Motor neuron (in vitro differentiated cells): ENCODE measurements at regions of chr11 and their contacts with region 1.

Region 1: GRCh38 chr11:62394825-62395538 is 23.9 kb upstream of the SCGB1A1 start:
- ATAC-seq: peak; percentile 80 to 94 (median 92)
- H3K4me3 ChIP-seq: peak overlapping the region in 4 of 5 donors; percentile 0 to 6 (median 1)
- H3K27ac ChIP-seq: peak overlapping the region in 1 of 2 donors; percentile 18
- H3K4me1 ChIP-seq: peaks cover 21 to 26% of the 10 kb centered on the region in 2 donors

Region 2: DNA sequence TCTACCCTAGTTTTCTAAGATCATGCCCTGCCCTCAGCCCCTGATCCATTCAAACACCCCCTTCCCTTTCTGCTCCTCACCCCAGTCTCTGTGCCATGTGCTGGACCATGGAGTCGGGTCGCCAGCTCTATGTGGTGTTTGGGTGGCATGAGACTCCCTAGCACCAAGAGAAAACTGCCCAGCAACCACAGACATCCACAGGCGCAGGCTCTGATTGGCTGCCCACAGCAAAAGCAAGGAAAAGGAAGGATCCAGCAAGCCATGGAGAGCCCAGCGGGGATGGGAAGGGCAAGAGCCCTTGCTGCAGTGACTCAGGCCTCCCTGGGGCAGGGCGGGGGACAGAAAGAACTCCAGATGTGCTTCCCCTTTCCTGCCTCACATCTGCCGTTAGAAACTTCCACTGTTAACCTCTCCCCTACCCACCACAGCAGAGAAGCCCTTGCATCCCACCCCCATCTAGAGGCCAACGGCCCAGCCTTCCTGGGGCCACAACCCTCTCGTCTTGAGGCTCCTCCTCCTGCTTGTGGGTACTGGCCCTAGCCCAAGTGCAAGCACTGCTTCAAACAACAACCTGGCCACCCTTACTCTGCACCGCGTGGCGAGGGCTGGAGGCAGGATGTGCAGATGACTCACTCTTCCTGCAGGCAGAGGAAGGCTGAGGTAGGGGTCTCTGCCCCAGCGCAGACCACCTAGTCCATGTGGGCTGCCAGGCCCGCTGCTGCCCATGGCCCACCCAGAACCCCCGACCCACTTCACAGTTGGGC is 161.3 kb after region 1 on chr11:
- in situ Hi-C with region 1: loop called in 3 of 9 experiments (anchors 10 to 25 kb)
- ATAC-seq: peak; percentile 43 to 76 (median 56)
- H3K4me3 ChIP-seq: no peak overlapping the region
- H3K27ac ChIP-seq: peak overlapping the region in 1 of 2 donors; percentile 47
- H3K4me1 ChIP-seq: peaks cover 4 to 42% of the 10 kb centered on the region in 2 donors

Region 3: DNA sequence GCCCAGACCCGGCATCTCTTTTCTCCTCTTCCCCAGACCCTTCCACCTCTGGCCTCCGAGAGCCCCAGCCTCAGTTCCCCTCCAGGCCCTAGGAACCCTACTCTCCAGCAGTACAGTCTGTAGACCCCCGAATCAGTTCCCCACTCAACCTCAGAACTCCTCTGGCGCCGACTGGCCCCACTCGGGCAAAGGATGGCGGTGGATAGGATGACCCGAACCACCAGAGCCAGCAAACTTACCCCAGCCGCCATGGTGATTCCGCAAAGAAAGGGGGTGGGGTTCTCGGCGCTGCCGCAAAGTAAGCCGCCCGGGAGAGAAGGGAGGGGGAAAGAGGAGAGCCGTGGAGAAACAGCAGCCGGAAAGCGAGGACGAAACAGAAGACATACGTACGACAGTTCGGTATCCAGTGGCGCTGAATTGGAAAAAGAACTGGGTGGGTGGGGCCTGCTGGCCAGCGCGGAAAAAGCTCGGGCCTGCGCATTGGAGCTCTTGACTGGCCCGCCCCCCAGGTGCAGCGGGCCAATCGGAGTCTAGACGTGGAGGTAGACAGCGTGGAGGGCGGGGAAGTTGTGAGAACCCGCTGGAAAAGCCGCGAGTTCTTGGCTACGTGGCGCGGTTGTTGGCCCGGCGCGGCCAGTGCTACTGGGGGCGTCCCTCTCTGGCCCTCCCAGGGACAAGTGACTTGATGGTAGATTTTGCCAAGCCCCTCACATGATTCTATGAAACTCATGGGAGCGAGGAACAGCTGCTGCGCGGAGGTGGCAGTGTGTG is 178.8 kb after region 1 on chr11 and contains the start of gene EEF1G:
- in situ Hi-C with region 1: loop called in 3 of 9 experiments (anchors 25 kb)
- ATAC-seq: peak; percentile 85 to 92 (median 89)
- H3K4me3 ChIP-seq: peak within 1 kb of the TSS; percentile 54 to 68 (median 63)
- H3K27ac ChIP-seq: peak within 1 kb of the TSS; percentile 93 to 96
- H3K4me1 ChIP-seq: peaks cover 15 to 19% of the 10 kb centered on the region in 2 donors
- total RNA-seq, gene EEF1G: 1,525 to 3,247 (median 2,152) TPM

Region 4: GRCh38 chr11:62591448-62592145 is 196.6 kb after region 1 on chr11 and contains the start of gene TUT1:
- in situ Hi-C with region 1: loop called in 1 of 9 experiments (anchors 25 kb)
- ATAC-seq: peak; percentile 87 to 93 (median 92)
- H3K4me3 ChIP-seq: peak within 1 kb of the TSS; percentile 60 to 87 (median 80)
- H3K27ac ChIP-seq: peak within 1 kb of the TSS; percentile 93 to 95
- H3K4me1 ChIP-seq: peaks cover 16 to 23% of the 10 kb centered on the region in 2 donors
- total RNA-seq, gene TUT1: 11.5 to 24.4 (median 17.3) TPM

Region 5: DNA sequence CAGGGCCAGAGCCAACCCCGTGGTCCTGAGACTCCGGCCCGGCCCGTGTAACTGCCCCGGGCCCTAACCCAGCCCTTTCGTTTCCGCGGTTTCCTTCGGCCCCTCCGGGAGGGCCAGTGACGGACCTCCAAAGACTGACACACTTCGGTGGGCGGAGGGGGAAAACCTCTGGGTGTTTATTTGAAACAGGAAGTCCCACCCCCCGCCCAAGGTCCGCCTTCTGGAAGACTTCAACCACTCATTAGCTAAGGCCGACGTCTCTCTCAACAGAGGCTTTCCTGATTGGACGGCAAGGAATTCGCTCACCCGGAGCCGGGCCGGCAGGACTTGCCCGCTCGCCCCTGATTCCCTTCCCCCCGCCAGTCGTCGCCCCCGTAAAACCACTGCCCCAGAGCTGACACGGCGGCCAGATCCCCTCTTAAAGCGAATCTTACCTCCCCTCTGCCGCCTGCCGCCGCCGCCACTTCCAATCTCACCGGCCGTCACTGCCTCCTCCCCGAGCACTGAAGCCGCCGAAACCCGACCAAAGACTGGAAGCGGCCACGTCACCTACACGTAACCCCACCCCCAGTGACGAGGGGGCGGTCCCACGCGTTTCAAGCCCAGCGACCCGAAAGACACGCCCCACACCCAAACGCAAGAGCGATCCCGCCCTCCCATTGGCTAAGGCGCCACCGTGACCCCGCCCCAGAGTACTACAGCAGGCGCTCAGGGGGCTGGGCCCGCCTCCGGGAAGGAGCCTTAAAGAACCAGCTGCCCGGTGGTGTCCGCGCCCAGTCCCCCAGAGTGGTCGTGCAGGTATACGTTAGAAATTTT is 436.7 kb after region 1 on chr11 and contains the start of gene STX5:
- in situ Hi-C with region 1: loop called in 1 of 9 experiments (anchors 25 kb)
- ATAC-seq: peak; percentile 75 to 91 (median 88)
- H3K4me3 ChIP-seq: peak within 1 kb of the TSS; percentile 74 to 96 (median 84)
- H3K27ac ChIP-seq: peak within 1 kb of the TSS; percentile 98 to 99
- H3K4me1 ChIP-seq: peaks cover 6 to 20% of the 10 kb centered on the region in 2 donors
- total RNA-seq, gene STX5: 26.2 to 54.3 (median 33.9) TPM

Region 6: GRCh38 chr11:62880803-62881578 is 486.0 kb after region 1 on chr11 and contains the start of gene SLC3A2:
- in situ Hi-C with region 1: loop called in 1 of 9 experiments (anchors 25 kb)
- ATAC-seq: peak; percentile 68 to 90 (median 86)
- H3K4me3 ChIP-seq: peak within 1 kb of the TSS; percentile 80 to 89 (median 86)
- H3K27ac ChIP-seq: peak within 1 kb of the TSS; percentile 98
- H3K4me1 ChIP-seq: peaks cover 35 to 42% of the 10 kb centered on the region in 2 donors
- total RNA-seq, gene SLC3A2: 97.8 to 428 (median 211) TPM